ENCODE measurements at regions of chr13 and their contacts with region 1.

Region 1: GRCh38 chr13:77480066-77480465 is 55.4 kb upstream of the SCEL start:
- DNase-seq: no peak
- H3K4me3 ChIP-seq: no peak overlapping the region
- CTCF ChIP-seq: no peak

Region 2: GRCh38 chr13:77329133-77329910 is 150.7 kb before region 1 on chr13:
- CTCF ChIA-PET with region 1: interaction called, 33 read pairs
- POLR2A ChIA-PET with region 1: interaction called, 3 read pairs
- DNase-seq: peak; percentile 82
- H3K4me3 ChIP-seq: peak overlapping the region; percentile 81
- CTCF ChIP-seq: no peak

Region 3: DNA sequence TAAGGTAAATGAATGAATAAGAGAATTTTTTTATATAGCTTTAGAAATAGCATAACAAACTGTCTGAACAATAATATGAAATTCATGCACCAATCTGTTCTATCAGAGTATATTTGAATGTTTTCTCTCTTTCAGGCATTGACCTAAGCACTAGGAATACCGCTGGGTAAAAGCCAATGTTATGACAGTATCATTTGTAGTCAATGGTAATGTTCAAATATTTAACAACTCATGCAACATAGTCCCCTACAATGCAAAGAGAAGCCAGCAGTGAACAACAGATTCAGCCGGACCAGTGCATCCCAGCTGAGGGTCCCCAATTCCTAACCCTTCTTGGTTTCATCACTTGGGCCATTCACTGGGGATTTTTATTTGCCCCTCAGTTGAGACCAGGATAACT is 100.6 kb before region 1 on chr13:
- CTCF ChIA-PET with region 1: no interaction called
- POLR2A ChIA-PET with region 1: no interaction called
- DNase-seq: no peak
- H3K4me3 ChIP-seq: no peak overlapping the region
- CTCF ChIP-seq: no peak

Region 4: GRCh38 chr13:77492982-77493381 is 12.9 kb after region 1 on chr13:
- CTCF ChIA-PET with region 1: interaction called, 17 read pairs
- POLR2A ChIA-PET with region 1: no interaction called
- DNase-seq: no peak
- H3K4me3 ChIP-seq: no peak overlapping the region
- CTCF ChIP-seq: peak; percentile 8

Region 5: GRCh38 chr13:77502104-77502720 is 22.1 kb after region 1 on chr13:
- CTCF ChIA-PET with region 1: interaction called, 10 read pairs
- POLR2A ChIA-PET with region 1: no interaction called
- DNase-seq: no peak
- H3K4me3 ChIP-seq: no peak overlapping the region
- CTCF ChIP-seq: no peak

Measured in AG04449 (cell line).